PC-3 (cell line): ENCODE measurements at regions of chr4 and their contacts with region 1.

Region 1: GRCh38 chr4:185513489-185514181 is 21.7 kb downstream of the PDLIM3 start:
- DNase-seq: peak; percentile 43
- ATAC-seq: peak; percentile 78
- H3K4me3 ChIP-seq: no peak overlapping the region
- H3K27ac ChIP-seq: no peak overlapping the region
- H3K4me1 ChIP-seq: peaks cover 16% of the 10 kb centered on the region
- H3K27me3 ChIP-seq: no peaks in the 10 kb centered on the region
- CTCF ChIP-seq: no peak

Region 2: GRCh38 chr4:185471235-185472102 is 42.2 kb before region 1 on chr4 and contains the start of gene CCDC110:
- CTCF ChIA-PET with region 1: no interaction called
- POLR2A ChIA-PET with region 1: interaction called, 3 read pairs
- intact Hi-C with region 1: loop called (anchors 2 kb)
- DNase-seq: peak; percentile 76
- ATAC-seq: peak; percentile 92
- H3K4me3 ChIP-seq: peak within 1 kb of the TSS; percentile 91
- H3K27ac ChIP-seq: no peak within 1 kb of the TSS
- H3K4me1 ChIP-seq: peaks cover 5% of the 10 kb centered on the region; the same call in 1 of the 2 replicates
- H3K27me3 ChIP-seq: no peaks in the 10 kb centered on the region
- CTCF ChIP-seq: peak; percentile 42; the same call in 1 of the 2 replicates
- total RNA-seq, gene CCDC110: 0.62 TPM in 1 of 2 replicates, not detected in the other

Region 3: DNA sequence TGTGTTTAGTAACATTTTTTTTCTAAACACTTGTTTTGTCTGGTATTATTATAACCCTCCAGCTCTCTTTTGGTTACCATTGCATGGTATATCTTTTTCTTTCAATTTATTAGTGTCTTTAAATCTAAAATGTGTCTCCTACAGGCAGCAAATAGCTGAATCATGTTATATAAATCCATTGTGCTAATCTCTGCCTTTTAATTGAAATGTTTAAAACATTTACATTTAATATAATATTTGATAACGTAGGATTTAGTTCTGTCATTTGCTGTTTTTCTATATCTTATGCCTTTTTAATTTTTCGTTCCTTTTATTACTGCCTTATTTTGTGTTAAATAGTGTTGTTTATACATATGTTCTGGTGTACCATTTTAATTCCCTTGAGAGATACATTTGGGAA is 25.0 kb before region 1 on chr4:
- CTCF ChIA-PET with region 1: no interaction called
- POLR2A ChIA-PET with region 1: no interaction called
- intact Hi-C with region 1: no loop called
- DNase-seq: no peak
- ATAC-seq: no peak
- H3K4me3 ChIP-seq: no peak overlapping the region
- H3K27ac ChIP-seq: no peak overlapping the region
- H3K4me1 ChIP-seq: no peaks in the 10 kb centered on the region
- H3K27me3 ChIP-seq: no peaks in the 10 kb centered on the region
- CTCF ChIP-seq: no peak